Gastrocnemius medialis (tissue), 4 donors: ENCODE measurements at regions of chr17 and their contacts with region 1.

Region 1: DNA sequence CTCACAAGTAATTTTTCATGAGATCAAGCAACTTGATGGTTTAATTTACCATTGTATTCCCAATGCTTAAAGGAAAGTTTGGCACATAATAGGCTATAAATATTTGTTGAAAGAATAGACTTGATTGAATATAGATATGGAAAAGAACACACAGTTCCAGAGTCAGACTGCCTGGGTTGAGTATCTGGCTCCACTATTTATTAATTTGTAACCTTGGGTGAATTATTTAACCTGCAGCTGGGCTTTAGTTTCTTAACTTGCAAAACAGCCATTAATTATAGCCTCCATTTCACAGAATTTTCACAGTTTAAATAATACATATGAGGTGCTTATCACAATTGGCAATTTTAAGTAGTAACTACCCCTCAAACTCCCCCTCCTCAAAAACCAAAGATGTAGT is 73.6 kb downstream of the NCOR1 start:
- DNase-seq: no peak
- ATAC-seq: no peak
- H3K4me3 ChIP-seq: no peak overlapping the region
- H3K27ac ChIP-seq: no peak overlapping the region
- H3K4me1 ChIP-seq: no peaks in the 10 kb centered on the region
- H3K27me3 ChIP-seq: no peaks in the 10 kb centered on the region
- CTCF ChIP-seq: no peak
- POLR2A ChIP-seq: no peak

Region 2: DNA sequence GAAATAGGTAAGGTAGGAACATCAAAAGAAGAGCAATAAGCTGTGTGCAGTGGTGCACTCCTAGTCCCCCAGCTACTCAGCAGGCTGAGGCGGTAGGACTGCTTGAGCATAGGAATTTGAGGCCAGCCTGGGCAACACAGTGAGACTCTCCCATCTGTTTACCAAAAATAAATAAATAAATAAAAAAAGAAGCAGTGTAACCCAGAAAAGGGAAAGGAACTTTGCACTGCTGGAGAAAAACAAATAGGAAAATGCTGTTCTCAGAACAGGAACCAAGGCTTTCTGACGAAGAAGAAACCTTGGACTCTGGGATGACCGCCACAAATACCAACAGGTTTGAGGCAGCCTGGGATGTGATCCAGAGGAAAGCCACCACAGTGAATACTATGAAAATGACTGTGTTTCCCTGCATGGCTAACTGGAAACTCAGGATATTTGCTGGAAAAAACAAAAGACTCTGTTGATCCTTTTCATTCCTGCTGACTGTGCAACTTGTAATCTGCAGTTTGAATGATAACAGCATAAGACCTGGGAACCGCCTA is 100.9 kb before region 1 on chr17:
- in situ Hi-C with region 1: no loop called
- intact Hi-C with region 1: no loop called
- DNase-seq: no peak
- ATAC-seq: no peak
- H3K4me3 ChIP-seq: no peak overlapping the region
- H3K27ac ChIP-seq: no peak overlapping the region
- H3K4me1 ChIP-seq: no peaks in the 10 kb centered on the region
- H3K27me3 ChIP-seq: no peaks in the 10 kb centered on the region
- CTCF ChIP-seq: no peak
- POLR2A ChIP-seq: no peak

Region 3: GRCh38 chr17:16073845-16074244 is 67.8 kb before region 1 on chr17:
- in situ Hi-C with region 1: no loop called
- intact Hi-C with region 1: loop called (anchors 10 kb)
- DNase-seq: no peak
- ATAC-seq: no peak
- H3K4me3 ChIP-seq: no peak overlapping the region
- H3K27ac ChIP-seq: no peak overlapping the region
- H3K4me1 ChIP-seq: no peaks in the 10 kb centered on the region
- H3K27me3 ChIP-seq: no peaks in the 10 kb centered on the region
- CTCF ChIP-seq: no peak
- POLR2A ChIP-seq: no peak